ENCODE measurements at regions of chr20 and their contacts with region 1.

Region 1: DNA sequence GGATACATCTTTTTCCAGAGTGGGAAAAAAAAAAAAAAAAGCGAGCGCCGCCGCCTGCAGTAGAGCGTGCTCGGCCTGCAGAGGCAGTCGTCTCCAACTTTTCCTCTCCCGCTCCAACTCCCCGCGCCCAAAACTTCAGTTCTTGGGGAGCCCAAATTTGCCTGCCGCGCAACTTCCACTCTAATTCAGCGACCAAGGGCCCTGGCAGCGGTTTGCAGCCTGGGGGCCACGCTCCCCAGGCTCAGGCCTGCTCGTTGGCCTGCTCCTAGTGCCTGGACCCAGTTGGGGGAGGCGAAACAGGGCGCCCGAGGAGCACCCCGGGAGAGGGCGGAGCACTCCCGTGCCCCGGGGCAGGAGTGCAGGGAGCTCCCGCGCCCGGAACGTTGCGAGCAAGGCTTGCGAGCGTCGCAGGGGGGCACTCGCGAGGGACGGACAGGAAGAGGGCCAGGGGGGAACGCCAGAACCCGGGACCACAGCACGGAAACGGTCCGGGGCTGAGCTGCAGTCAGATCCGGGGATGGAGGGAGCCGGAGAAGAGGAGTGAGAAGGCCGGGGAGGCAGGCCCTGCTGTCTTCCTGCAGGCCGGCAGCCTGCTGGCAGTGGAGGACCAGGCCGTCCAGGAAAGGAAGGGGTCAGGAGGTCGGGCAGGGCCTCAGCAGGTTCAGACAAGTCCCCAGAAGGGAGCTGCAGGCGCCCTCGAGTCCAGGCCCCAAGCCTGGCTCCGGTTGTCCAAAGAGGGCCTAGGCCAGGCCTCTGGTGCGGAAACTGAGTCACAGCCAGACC is at the start of gene STX16:
- DNase-seq: peak; percentile 89
- ATAC-seq: peak; percentile 76
- H3K4me3 Mint-ChIP-seq: peak within 1 kb of the TSS; percentile 90
- H3K27ac Mint-ChIP-seq: peak within 1 kb of the TSS; percentile 95
- H3K4me1 Mint-ChIP-seq: peaks cover 34% of the 10 kb centered on the region
- H3K27me3 Mint-ChIP-seq: no peaks in the 10 kb centered on the region; the same call in 1 of the 2 replicates
- CTCF ChIP-seq: peak; percentile 42
- total RNA-seq, gene STX16: 89.1 to 116 TPM (median 113 TPM) in 3 replicates

Region 2: DNA sequence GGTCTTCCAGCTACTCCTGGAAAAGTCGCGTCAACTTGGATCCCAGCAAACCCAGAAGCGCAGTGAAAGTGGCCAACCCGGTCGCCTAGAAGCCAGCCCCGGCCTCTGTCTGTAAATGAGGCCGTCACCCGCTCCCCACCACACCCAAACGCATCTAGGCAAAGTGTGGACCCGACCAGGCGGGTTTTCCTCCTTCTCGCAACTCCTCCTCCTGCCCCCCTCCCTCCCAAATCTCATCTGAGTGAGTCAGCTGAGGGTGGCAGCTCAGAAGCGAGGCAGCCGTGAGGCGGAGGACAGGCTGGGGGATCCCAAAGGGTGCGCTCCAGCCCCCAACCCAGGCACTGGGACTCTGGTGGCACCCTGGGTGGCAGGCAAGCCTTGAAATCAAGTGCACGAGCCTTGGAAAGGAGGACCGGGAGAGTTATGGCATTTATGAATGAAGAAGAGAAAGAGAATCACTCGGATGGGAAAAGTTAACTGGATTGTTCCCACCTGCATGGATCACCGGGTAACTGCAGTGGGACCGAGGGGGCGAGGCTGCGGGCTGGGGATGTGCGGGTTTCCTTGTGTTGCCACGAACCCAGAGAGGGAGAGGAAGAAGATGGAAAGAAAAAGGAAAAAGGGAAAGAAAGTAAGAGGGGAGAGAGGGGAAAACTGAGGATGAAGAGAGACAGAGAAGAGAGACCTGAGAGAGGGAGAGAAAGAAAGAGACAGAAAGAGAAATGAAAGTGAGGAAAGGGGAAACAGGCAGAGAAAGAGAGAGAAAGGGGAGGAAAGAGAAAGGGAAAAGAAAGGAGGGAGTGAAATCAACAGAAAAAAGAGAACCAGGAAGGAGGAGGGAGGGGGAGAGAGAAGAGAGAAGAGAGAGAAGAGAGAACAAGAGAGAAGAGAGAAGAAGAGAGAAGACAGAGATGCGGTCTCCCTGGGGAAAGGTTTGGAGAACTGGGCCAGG is 135.5 kb before region 1 on chr20 and contains the start of gene APCDD1L:
- CTCF ChIA-PET with region 1: interaction called, 14 read pairs
- POLR2A ChIA-PET with region 1: interaction called, 7 read pairs
- DNase-seq: no peak
- ATAC-seq: peak; percentile 67
- H3K4me3 Mint-ChIP-seq: peak within 1 kb of the TSS; percentile 78
- H3K27ac Mint-ChIP-seq: no peak within 1 kb of the TSS
- H3K4me1 Mint-ChIP-seq: peaks cover 23% of the 10 kb centered on the region
- H3K27me3 Mint-ChIP-seq: peaks cover 64% of the 10 kb centered on the region
- CTCF ChIP-seq: no peak
- total RNA-seq, gene APCDD1L: 2.4 to 3.2 TPM (median 2.5 TPM) in 3 replicates

Region 3: GRCh38 chr20:58669287-58670006 is 18.5 kb after region 1 on chr20:
- CTCF ChIA-PET with region 1: interaction called, 42 read pairs
- POLR2A ChIA-PET with region 1: interaction called, 22 read pairs
- DNase-seq: peak; percentile 73
- ATAC-seq: peak; percentile 78
- H3K4me3 Mint-ChIP-seq: peak overlapping the region; percentile 49
- H3K27ac Mint-ChIP-seq: peak overlapping the region; percentile 100
- H3K4me1 Mint-ChIP-seq: peaks cover 81% of the 10 kb centered on the region
- H3K27me3 Mint-ChIP-seq: no peaks in the 10 kb centered on the region
- CTCF ChIP-seq: no peak

Region 4: DNA sequence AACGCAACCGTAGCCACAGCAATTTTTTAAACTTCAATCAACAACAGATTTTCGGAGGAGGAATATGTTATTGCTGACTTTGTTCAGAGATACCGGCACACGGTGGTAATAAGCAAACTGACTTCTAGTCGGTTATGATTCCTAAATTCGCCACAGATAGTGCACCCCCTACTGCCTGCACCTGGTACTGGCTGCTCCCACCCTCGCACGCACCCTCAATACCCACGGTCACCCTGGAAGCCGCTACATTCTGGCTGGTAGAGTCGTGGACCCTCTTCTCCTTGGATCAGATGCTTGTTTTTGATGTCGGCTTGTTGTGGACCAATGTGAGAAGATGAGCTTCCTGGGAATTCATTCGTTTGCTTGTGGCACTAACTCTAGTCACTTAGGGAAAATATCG is 52.3 kb after region 1 on chr20:
- CTCF ChIA-PET with region 1: interaction called, 11 read pairs
- POLR2A ChIA-PET with region 1: no interaction called
- DNase-seq: peak; percentile 13
- ATAC-seq: no peak
- H3K4me3 Mint-ChIP-seq: no peak overlapping the region
- H3K27ac Mint-ChIP-seq: no peak overlapping the region
- H3K4me1 Mint-ChIP-seq: peaks cover 9% of the 10 kb centered on the region
- H3K27me3 Mint-ChIP-seq: no peaks in the 10 kb centered on the region
- CTCF ChIP-seq: 0 out of 2 replicates have a peak, but pooled peaks have one; percentile 16

Region 5: GRCh38 chr20:58850693-58851174 is 199.8 kb after region 1 on chr20 and contains the start of gene GNAS-AS1:
- CTCF ChIA-PET with region 1: interaction called, 50 read pairs
- POLR2A ChIA-PET with region 1: interaction called, 7 read pairs
- DNase-seq: peak; percentile 95
- ATAC-seq: peak; percentile 60
- H3K4me3 Mint-ChIP-seq: peak within 1 kb of the TSS; percentile 74
- H3K27ac Mint-ChIP-seq: peak within 1 kb of the TSS; percentile 94
- H3K4me1 Mint-ChIP-seq: peaks cover 72% of the 10 kb centered on the region
- H3K27me3 Mint-ChIP-seq: peaks cover 48% of the 10 kb centered on the region
- CTCF ChIP-seq: no peak; the same call in 1 of the 2 replicates
- total RNA-seq, gene GNAS-AS1: 12.2 to 13.4 TPM (median 12.8 TPM) in 3 replicates